Activated CD4-positive, alpha-beta memory T cell treated with anti-CD3 and anti-CD28 coated beads, Interleukin-2, amount 10 ng/mL, durations not matched to agents 7 days and 5 days (primary cell): ENCODE measurements at regions of chr19 and their contacts with region 1.

Region 1: DNA sequence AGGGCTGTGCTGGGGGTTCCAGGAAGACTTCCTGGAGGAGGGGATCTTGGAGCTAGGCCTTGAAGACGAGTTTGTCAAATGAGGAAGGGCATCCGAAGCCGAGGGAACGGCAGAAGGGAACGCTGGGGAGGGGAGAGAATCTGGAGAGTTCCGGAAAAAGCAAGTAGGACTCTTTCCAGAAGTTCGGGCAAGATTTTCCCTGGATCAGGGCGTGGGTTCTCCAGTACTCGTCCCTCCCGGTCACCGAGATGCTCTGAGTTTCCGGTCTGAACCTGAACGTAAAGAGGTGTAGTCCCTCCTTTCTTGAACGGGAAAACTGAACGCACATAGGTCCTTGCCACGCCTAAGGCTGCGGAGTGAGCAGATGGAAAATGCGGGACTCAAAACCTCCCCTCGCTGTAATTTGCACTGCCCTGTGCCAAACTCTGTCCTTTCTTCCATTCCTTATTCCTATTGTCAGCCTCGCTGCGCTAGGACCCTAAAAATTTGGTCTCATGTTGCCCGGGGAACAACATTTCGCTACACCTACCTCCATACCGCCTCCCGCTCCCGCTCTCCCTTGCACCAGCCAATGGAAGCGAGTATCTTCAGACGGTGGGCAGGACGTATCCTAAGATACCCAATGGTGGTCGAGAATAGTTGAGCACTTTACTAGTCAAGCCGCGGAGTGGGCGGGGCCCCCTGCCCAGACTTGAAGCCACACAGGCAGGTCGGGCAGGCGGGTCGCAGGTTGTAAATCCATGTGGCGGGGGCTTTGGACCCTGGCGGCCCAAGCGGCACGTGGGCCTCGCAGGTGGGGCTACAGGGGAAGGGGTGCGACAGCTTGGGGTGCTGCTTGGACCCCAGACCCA is at the start of gene GTPBP3:
- DNase-seq: peak; percentile 98
- H3K4me3 Mint-ChIP-seq: peak within 1 kb of the TSS; percentile 81
- H3K27ac Mint-ChIP-seq: peak within 1 kb of the TSS; percentile 89
- H3K4me1 Mint-ChIP-seq: peaks cover 55% of the 10 kb centered on the region
- H3K27me3 Mint-ChIP-seq: no peaks in the 10 kb centered on the region
- total RNA-seq, gene GTPBP3: 30.2 to 34.2 TPM

Region 2: DNA sequence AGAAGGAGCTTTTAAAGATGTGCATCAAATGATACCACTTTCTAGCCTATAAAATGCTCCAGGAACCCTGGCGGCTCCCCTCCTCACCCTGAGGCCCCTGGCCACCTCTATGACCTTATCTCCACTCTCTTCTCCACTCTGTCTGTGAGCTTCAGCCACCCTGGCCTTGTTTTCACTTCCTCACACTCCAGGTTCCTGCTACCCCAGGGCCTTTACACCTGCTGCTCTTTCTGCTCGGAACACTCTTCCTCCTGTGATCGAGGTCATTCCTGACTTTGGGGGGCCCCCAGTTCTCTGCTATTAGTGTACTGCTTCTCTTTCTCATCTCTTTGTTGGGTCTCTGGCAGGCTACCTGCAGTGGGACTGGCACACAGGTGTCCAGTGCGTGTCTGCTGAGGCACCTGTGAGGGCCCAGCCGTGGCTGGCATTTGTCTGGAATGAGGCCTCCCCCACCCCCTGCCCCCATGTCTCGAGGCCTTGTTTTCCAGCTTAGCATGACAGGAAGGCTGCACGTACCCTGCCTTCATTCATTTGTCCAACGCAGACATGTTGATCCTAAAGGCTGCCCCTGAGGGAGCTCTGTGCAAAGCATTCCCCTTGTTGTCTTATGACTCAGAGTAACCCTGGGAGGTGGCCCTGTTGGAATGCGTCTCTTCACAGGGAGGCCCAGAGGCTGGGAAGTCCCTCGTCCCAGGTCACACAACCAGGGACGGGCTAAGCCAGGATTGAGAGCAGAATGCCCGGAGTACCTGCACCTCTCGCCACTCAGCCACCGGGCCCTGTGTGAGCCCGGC is 25.4 kb before region 1 on chr19:
- CTCF ChIA-PET with region 1: interaction called, 11 read pairs
- POLR2A ChIA-PET with region 1: interaction called, 50 read pairs
- DNase-seq: no peak
- H3K4me3 Mint-ChIP-seq: peak overlapping the region; percentile 98
- H3K27ac Mint-ChIP-seq: no peak overlapping the region
- H3K4me1 Mint-ChIP-seq: peaks cover 49% of the 10 kb centered on the region
- H3K27me3 Mint-ChIP-seq: no peaks in the 10 kb centered on the region

Region 3: GRCh38 chr19:17325897-17326598 is 11.0 kb before region 1 on chr19:
- CTCF ChIA-PET with region 1: no interaction called
- POLR2A ChIA-PET with region 1: interaction called, 21 read pairs
- DNase-seq: no peak
- H3K4me3 Mint-ChIP-seq: no peak overlapping the region
- H3K27ac Mint-ChIP-seq: no peak overlapping the region
- H3K4me1 Mint-ChIP-seq: peaks cover 17% of the 10 kb centered on the region
- H3K27me3 Mint-ChIP-seq: peaks cover 15% of the 10 kb centered on the region

Region 4: GRCh38 chr19:17398902-17399527 is 61.9 kb after region 1 on chr19:
- CTCF ChIA-PET with region 1: no interaction called
- POLR2A ChIA-PET with region 1: no interaction called
- DNase-seq: no peak
- H3K4me3 Mint-ChIP-seq: no peak overlapping the region
- H3K27ac Mint-ChIP-seq: no peak overlapping the region
- H3K4me1 Mint-ChIP-seq: peaks cover 31% of the 10 kb centered on the region
- H3K27me3 Mint-ChIP-seq: no peaks in the 10 kb centered on the region